Panc1 (cell line): ENCODE measurements at regions of chr2 and their contacts with region 1.

Region 1: GRCh38 chr2:225797394-225797793 is 397.9 kb downstream of the NYAP2 start:
- DNase-seq: no peak
- ATAC-seq: no peak
- H3K4me3 ChIP-seq: no peak overlapping the region
- H3K27ac ChIP-seq: no peak overlapping the region
- H3K4me1 ChIP-seq: no peaks in the 10 kb centered on the region
- H3K27me3 ChIP-seq: no peaks in the 10 kb centered on the region
- CTCF ChIP-seq: peak; percentile 5; the same call in 1 of the 2 replicates

Region 2: DNA sequence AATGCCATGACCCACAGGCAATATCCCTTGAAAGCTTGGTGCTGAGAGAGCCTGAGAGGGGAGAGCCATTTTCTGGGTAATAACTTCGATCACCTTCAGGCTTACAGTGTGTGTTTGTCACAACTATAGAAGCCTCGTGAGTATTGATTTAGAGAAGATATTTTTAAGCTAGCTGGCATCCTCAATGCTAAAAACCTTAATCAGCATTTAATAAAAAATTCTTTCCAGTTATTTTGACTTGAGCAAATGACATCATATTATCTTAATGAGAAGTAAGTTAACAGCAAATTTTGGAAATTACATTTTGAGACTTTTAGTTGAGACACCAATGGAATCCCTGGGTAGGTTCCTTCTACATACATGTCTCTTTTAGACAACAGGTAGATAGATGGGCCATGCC is 114.1 kb before region 1 on chr2:
- CTCF ChIA-PET with region 1: no interaction called
- POLR2A ChIA-PET with region 1: no interaction called
- in situ Hi-C with region 1: no loop called
- intact Hi-C with region 1: loop called (anchors 10 kb)
- DNase-seq: no peak
- ATAC-seq: no peak
- H3K4me3 ChIP-seq: no peak overlapping the region
- H3K27ac ChIP-seq: no peak overlapping the region
- H3K4me1 ChIP-seq: no peaks in the 10 kb centered on the region
- H3K27me3 ChIP-seq: no peaks in the 10 kb centered on the region
- CTCF ChIP-seq: no peak

Region 3: DNA sequence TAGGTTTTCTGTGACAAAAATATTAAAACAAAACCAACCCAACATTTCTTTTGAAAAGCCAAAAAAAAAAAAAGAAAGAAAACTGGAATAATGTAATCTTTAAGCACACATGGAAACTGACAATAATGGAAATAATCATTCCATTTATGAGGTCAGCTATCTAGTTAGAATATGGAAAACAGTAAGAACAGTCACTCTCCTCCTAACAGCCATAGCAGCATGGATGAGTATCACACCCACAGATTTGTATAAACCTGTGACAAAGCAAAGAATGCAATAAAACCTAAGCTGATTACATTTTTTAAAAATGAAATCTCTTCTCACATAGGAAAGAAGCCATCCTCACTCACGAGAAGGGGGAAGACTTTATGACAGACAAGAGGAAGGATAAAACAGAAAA is 39.9 kb after region 1 on chr2:
- CTCF ChIA-PET with region 1: no interaction called
- POLR2A ChIA-PET with region 1: no interaction called
- in situ Hi-C with region 1: no loop called
- intact Hi-C with region 1: no loop called
- DNase-seq: no peak
- ATAC-seq: no peak
- H3K4me3 ChIP-seq: no peak overlapping the region
- H3K27ac ChIP-seq: no peak overlapping the region
- H3K4me1 ChIP-seq: no peaks in the 10 kb centered on the region
- H3K27me3 ChIP-seq: no peaks in the 10 kb centered on the region
- CTCF ChIP-seq: no peak